ENCODE measurements at regions of chr11 and their contacts with region 1.

Region 1: GRCh38 chr11:110195845-110196754 is 100.3 kb downstream of the RDX start:
- DNase-seq: peak; percentile 38
- ATAC-seq: peak; percentile 37
- H3K4me3 ChIP-seq: peak overlapping the region in 1 of 2 experiments; percentile 34; a peak in 2 of 4 replicates
- H3K27ac ChIP-seq: peak overlapping the region; percentile 80
- H3K4me1 ChIP-seq: peaks cover 44 to 46% of the 10 kb centered on the region in 2 experiments
- H3K27me3 ChIP-seq: no peaks in the 10 kb centered on the region
- CTCF ChIP-seq: no peak
- POLR2A ChIP-seq: no peak
- RAD21 ChIP-seq: no peak; the same call in 1 of the 2 replicates

Region 2: DNA sequence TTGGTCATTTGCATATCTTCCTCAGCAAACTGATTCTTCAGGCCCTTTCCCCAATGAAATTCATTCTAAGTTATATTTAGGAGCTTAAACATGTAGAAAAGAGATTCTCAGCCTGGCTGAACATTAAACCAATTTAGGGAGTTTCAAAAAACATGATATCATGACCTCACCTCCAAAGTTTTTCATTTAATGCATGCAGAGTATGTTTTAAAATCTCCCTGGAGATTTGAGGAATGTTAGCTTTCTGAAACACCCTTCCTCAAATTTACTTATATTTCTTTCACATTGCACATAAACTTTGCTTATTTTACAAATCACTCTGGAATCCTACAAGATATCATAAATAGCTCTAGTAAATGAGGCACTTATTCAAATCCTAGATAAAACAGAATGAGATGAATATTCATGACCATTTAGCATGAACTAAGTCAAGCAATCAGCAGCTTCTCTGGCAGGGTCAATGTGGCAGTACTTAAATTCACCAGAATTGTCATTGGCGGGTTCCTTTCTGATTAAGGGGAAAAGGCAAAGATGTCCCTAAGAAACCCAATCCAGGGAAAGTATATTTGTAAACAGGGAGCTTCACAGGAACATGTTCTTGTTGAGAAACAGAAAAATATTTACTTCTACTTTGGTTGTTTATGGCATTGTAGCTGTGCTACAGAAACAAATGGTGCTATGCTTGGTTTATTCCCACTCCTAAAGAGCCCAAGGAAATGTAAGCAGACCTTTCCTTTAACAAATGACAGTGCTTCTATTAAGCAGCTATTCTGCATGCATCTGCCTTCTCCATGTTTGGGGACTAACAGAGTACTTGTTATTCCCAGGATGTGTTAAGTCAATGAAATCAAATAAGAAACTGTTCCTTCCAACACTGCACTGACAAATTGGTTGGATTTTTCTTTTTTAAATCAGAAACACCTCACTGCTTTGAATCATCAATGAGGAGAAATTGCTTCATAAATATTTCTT is 611.8 kb before region 1 on chr11:
- CTCF ChIA-PET with region 1: no interaction called
- POLR2A ChIA-PET with region 1: no interaction called
- RAD21 ChIA-PET with region 1: no interaction called
- intact Hi-C with region 1: no loop called
- DNase-seq: no peak
- ATAC-seq: no peak
- H3K4me3 ChIP-seq: no peak overlapping the region
- H3K27ac ChIP-seq: no peak overlapping the region
- H3K4me1 ChIP-seq: no peaks in the 10 kb centered on the region
- H3K27me3 ChIP-seq: no peaks in the 10 kb centered on the region
- CTCF ChIP-seq: no peak
- POLR2A ChIP-seq: no peak
- RAD21 ChIP-seq: no peak

Region 3: DNA sequence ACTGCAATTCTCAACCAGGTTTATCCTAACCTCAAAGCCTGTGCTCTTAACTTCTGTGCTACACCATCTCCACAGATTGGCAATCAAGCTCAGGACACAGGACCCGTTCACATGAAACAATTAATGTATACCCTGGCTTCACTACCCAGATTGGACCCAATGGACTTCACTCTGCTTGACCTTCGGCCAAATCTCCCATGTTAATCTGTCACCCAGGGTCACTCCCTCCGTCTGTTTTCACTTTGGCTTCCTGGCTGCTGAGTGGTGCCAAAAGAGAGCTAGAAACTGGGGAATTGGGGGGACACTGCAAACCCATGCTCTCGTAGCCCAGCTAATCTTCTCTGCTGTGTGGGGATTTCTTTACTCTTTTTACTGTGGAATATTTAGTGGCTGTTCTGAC is 319.1 kb before region 1 on chr11:
- CTCF ChIA-PET with region 1: no interaction called
- POLR2A ChIA-PET with region 1: no interaction called
- RAD21 ChIA-PET with region 1: no interaction called
- intact Hi-C with region 1: no loop called
- DNase-seq: no peak
- ATAC-seq: no peak
- H3K4me3 ChIP-seq: no peak overlapping the region
- H3K27ac ChIP-seq: no peak overlapping the region
- H3K4me1 ChIP-seq: no peaks in the 10 kb centered on the region
- H3K27me3 ChIP-seq: no peaks in the 10 kb centered on the region
- CTCF ChIP-seq: no peak
- POLR2A ChIP-seq: no peak
- RAD21 ChIP-seq: no peak

Region 4: DNA sequence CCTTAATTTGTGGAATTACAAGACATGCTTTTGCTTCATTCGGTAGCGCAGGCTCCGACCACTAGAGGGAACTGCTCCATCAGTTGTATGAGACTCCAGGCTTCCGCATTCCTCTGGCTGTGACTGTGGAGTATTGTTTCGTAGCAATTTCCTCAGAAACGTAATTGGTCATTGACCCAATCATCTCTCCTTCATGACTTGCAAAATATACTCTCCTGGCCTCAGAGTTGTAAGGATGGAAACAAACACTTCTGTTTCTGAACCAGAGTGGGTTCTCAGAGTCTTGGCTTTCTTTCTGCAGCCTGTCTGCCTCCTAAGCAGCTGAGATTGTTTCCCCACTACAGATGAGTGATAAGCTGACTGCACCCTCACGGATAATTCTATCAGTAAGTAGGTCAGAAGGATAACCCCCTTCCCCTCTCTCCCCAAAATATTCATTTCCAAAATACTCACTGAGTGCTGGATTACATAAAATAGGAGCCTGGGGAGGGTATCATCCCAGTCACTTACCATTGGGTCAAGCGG is 249.7 kb before region 1 on chr11:
- CTCF ChIA-PET with region 1: interaction called, 3 read pairs
- POLR2A ChIA-PET with region 1: no interaction called
- RAD21 ChIA-PET with region 1: no interaction called
- intact Hi-C with region 1: loop called (anchors 5 kb)
- DNase-seq: peak; percentile 91
- ATAC-seq: peak; percentile 96
- H3K4me3 ChIP-seq: peak overlapping the region; percentile 19 to 46
- H3K27ac ChIP-seq: peak overlapping the region; percentile 8; the same call in 1 of the 2 replicates
- H3K4me1 ChIP-seq: peaks cover 0 to 12% of the 10 kb centered on the region in 2 experiments; a peak in 2 of 4 replicates
- H3K27me3 ChIP-seq: no peaks in the 10 kb centered on the region
- CTCF ChIP-seq: peak; percentile 82 to 96 (median 94)
- POLR2A ChIP-seq: no peak
- RAD21 ChIP-seq: peak; percentile 98

Region 5: DNA sequence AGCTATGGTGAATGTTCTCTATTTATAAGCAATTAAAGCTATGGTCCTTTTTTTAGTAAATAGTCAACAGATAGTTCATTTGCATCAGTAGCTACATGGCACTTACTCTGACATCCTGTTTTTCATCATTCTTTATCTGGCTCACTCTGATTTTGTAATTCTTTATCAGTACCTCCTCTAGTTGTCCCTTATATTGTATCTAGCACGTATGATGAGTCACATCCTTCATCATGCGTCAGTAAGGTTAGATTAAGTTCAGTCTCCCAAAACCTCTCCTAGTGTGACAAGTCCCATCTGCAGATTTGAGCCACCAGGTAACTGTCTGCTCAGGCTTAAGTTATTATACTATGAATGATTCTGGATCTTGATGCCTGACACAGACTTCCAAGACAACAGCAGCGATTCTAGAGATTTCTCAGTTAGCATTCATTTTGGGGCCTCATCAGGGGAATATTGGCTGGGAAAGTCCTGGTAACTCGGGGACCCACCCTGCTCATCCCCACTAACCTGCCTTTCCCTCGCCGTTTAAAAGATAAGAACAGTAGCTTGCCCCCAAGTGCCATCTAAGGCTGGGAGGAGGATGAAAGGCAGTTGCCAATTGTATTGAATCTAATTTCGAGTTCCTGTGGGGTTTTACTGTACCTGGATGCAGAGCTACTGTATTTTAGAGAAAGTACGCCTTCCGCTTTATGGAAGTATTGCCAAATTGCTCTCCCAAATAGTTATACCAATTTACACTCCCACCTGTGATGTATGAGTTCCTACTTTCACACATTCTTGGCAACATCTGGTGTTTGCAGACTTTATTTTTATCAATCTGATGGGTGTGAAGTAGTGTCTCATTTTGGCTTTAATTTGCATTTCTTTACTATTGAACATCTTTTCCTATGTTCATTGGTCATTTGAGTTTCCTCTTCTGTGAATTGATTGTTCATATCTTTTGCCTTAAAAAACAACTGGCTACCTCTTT is 47.0 kb before region 1 on chr11:
- CTCF ChIA-PET with region 1: no interaction called
- POLR2A ChIA-PET with region 1: no interaction called
- RAD21 ChIA-PET with region 1: no interaction called
- intact Hi-C with region 1: no loop called
- DNase-seq: peak; percentile 56
- ATAC-seq: peak; percentile 96
- H3K4me3 ChIP-seq: peak overlapping the region in 1 of 2 experiments; percentile 25; a peak in 3 of 4 replicates
- H3K27ac ChIP-seq: peak overlapping the region; percentile 1; the same call in 1 of the 2 replicates
- H3K4me1 ChIP-seq: peaks cover 19 to 31% of the 10 kb centered on the region in 2 experiments
- H3K27me3 ChIP-seq: no peaks in the 10 kb centered on the region
- CTCF ChIP-seq: no peak
- POLR2A ChIP-seq: no peak
- RAD21 ChIP-seq: no peak

Region 6: GRCh38 chr11:110362971-110363509 is 166.9 kb after region 1 on chr11:
- CTCF ChIA-PET with region 1: interaction called, 59 read pairs
- POLR2A ChIA-PET with region 1: no interaction called
- RAD21 ChIA-PET with region 1: interaction called, 3 to 7 read pairs
- intact Hi-C with region 1: no loop called
- DNase-seq: peak; percentile 34
- ATAC-seq: peak; percentile 82
- H3K4me3 ChIP-seq: peak overlapping the region; percentile 18 to 35
- H3K27ac ChIP-seq: peak overlapping the region; percentile 63
- H3K4me1 ChIP-seq: peaks cover 38 to 39% of the 10 kb centered on the region in 2 experiments
- H3K27me3 ChIP-seq: no peaks in the 10 kb centered on the region
- CTCF ChIP-seq: no peak
- POLR2A ChIP-seq: no peak
- RAD21 ChIP-seq: peak; percentile 12; the same call in 1 of the 2 replicates

Region 7: GRCh38 chr11:110376711-110377324 is 180.7 kb after region 1 on chr11:
- CTCF ChIA-PET with region 1: interaction called, 42 read pairs
- POLR2A ChIA-PET with region 1: no interaction called
- RAD21 ChIA-PET with region 1: no interaction called
- intact Hi-C with region 1: loop called (anchors 1 kb)
- DNase-seq: peak; percentile 85
- ATAC-seq: peak; percentile 94
- H3K4me3 ChIP-seq: peak overlapping the region; percentile 27 to 33; a peak in 3 of 4 replicates
- H3K27ac ChIP-seq: peak overlapping the region; percentile 21; the same call in 1 of the 2 replicates
- H3K4me1 ChIP-seq: peaks cover 8% of the 10 kb centered on the region in 2 experiments; a peak in 3 of 4 replicates
- H3K27me3 ChIP-seq: no peaks in the 10 kb centered on the region
- CTCF ChIP-seq: peak; percentile 79 to 93 (median 92)
- POLR2A ChIP-seq: no peak
- RAD21 ChIP-seq: peak; percentile 94

Region 8: DNA sequence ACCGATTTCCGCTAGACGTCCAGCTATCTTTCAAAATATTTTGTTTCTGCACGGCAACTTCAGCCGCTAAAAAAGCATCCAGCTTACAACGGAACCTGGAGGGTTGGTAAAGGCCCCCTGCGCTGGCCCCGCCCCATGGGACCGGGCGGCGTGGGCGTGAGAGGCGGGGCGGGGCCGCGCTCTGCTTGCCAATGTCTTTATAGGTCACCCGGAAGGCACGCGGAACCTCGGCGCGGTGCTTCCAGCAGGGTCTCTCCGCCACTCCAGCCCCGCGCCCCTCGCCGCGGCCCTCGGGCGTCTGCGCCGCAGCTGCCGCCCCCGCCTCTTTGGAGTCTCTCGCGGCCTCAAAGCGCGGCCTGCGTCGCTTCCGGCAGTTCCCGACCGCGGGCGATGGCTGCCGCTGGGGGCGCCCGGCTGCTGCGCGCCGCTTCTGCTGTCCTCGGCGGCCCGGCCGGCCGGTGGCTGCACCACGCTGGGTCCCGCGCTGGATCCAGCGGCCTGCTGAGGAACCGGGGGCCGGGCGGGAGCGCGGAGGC is 233.7 kb after region 1 on chr11 and contains the start of gene FDX1:
- CTCF ChIA-PET with region 1: interaction called, 28 read pairs
- POLR2A ChIA-PET with region 1: no interaction called
- RAD21 ChIA-PET with region 1: no interaction called
- intact Hi-C with region 1: loop called (anchors 1 kb)
- DNase-seq: peak; percentile 51
- ATAC-seq: peak; percentile 85
- H3K4me3 ChIP-seq: peak within 1 kb of the TSS; percentile 72 to 89
- H3K27ac ChIP-seq: peak within 1 kb of the TSS; percentile 84
- H3K4me1 ChIP-seq: peaks cover 35 to 50% of the 10 kb centered on the region in 2 experiments
- H3K27me3 ChIP-seq: no peaks in the 10 kb centered on the region
- CTCF ChIP-seq: peak; percentile 4 to 40 (median 32); a peak in 4 of 6 replicates
- POLR2A ChIP-seq: peak; percentile 55
- RAD21 ChIP-seq: no peak
- total RNA-seq, gene FDX1: 14.5 TPM

Region 9: DNA sequence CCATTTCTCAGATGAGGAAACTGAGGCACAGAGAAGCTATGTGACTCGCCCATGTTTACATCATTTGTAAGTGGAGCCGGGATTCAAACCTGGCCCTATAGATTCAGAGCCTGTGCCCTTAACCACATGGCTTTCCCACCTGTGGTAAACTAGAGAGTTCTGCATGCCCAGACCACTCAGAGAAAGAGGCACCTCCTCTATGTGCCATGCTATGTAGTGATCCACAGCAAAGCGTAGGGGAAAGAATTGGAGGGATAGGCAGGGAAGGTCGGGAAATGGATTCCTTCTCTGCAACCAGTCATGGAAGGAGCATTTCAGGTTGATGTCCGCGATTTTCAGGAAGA is 1034.0 kb after region 1 on chr11:
- CTCF ChIA-PET with region 1: interaction called, 3 read pairs
- POLR2A ChIA-PET with region 1: no interaction called
- RAD21 ChIA-PET with region 1: no interaction called
- intact Hi-C with region 1: loop called (anchors 10 kb)
- DNase-seq: no peak
- ATAC-seq: peak; percentile 67
- H3K4me3 ChIP-seq: peak overlapping the region; percentile 62 to 63; a peak in 3 of 4 replicates
- H3K27ac ChIP-seq: no peak overlapping the region
- H3K4me1 ChIP-seq: peaks cover 0 to 3% of the 10 kb centered on the region in 2 experiments; a peak in 1 of 4 replicates
- H3K27me3 ChIP-seq: no peaks in the 10 kb centered on the region
- CTCF ChIP-seq: no peak
- POLR2A ChIP-seq: no peak
- RAD21 ChIP-seq: no peak

Region 10: DNA sequence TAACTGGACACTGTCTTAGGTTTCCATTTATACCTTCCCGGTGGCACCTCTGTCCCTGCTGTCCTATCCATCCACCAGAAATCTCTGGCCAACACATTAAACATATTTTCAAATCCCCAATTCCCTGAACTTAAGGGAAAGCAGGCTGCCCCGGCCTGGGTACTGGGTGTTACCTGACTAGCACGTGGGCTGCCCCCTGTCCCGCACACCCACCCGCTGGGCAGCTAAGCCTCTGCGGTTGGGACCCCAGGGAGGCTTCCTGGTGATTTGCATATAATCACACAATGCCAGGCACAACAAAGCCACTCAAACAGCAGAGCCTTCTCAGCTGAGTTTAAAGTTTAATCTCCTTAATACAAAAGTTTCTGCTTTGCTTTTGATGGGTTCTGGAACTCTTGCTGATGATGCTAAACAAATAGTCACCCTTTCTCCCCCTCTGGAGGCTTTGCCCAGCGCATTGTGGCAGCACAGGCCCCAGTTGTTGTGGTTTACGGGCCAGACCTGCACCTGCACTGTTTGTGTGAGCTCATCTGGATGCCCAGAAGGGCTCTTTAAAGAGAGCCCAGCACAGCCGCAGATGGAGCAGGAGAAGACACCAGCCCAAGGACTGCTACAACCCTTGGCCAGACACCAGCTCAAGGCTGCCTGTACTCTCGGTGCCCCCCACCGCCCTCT is 1242.9 kb after region 1 on chr11:
- CTCF ChIA-PET with region 1: no interaction called
- POLR2A ChIA-PET with region 1: no interaction called
- RAD21 ChIA-PET with region 1: no interaction called
- intact Hi-C with region 1: loop called (anchors 10 kb)
- DNase-seq: no peak
- ATAC-seq: no peak
- H3K4me3 ChIP-seq: no peak overlapping the region
- H3K27ac ChIP-seq: no peak overlapping the region
- H3K4me1 ChIP-seq: peaks cover 4 to 12% of the 10 kb centered on the region in 2 experiments; a peak in 3 of 4 replicates
- H3K27me3 ChIP-seq: no peaks in the 10 kb centered on the region
- CTCF ChIP-seq: no peak
- POLR2A ChIP-seq: no peak
- RAD21 ChIP-seq: no peak

Measured in HCT116 (cell line).